ENCODE measurements at regions of chr6 and their contacts with region 1.

Region 1: DNA sequence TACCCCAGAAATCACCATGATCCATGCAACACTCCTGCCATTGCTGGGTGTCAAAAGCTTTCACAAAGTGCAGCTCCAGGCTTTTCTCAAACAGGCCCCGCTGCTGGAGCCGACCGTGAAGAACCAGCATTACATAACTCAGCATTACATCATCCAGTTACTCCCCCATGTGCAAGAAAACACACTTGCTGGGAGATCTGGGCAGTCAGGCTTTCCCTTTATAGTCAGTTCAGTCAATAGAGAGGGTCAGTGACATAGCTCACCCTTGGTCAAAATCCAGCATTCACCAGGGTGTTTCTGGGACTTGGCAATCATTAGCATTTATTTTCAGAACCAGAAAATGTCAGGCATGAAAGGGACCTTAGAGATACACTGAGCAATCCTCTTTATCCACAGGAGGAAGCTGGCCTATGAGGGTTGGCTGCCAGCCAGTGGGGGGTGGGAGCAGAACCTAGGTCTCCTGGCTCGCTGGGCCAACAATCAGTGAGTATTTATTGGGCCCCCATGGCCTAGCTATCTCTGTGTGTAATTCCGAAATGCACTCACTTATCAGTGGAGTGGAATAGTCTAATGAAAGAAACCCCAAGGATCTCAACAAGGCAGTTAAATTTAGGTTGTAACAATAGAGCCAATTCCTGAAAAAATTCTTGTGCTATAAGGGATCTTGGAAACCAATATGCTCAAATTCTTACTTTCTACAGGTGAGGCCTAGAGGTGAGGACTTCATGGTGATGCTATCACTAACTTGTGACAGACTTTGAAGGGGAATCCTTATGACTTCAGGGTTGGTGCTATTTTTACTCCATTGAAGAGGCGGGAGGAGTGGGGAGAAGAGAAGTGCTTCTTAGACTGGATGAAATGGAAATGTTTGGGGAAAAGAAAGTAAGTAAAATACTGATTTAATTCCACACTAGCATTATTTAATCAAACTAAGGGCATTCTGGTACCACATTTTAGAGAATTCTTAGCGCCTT is 54.6 kb downstream of the LYRM4 start:
- DNase-seq: no peak
- H3K4me3 ChIP-seq: no peak overlapping the region
- H3K27ac ChIP-seq: peak overlapping the region; percentile 46 to 72 (median 65)
- H3K4me1 ChIP-seq: peaks cover 11 to 60% (median 27%) of the 10 kb centered on the region in 3 donors
- H3K27me3 ChIP-seq: no peaks in the 10 kb centered on the region
- CTCF ChIP-seq: no peak
- POLR2A ChIP-seq: no peak

Region 2: DNA sequence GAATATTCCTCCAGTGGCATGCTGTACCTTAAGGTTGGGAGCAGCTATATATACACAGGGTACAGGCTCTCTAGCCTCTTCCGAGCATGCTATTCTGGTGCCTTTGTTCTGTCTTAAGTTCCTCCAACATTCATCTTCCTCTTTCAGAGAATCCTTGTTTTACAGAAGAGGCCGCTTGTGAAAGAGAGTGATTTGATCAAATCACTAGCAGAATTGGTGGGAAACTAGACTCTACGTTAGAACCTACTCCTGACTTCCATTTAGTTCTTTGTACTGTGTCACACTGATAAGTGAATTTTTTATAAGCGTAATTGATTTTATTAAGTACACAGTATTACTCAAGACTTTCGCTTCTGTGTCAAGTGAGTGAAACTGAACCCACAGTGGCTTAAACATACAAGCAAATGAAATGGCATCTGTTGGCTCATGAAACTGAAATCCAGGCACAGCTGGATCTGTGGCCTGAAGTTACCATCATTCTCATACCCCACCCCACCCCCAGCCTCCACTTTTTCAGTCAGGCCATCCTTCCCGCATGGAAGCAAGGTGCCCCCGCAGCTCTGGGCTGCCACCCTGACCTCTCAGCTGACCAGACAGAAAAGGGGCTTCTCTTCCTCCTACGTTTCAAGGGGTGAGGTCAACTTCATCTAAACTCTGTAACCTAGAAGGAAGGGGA is 304.6 kb before region 1 on chr6:
- intact Hi-C with region 1: no loop called
- DNase-seq: no peak
- H3K4me3 ChIP-seq: no peak overlapping the region
- H3K27ac ChIP-seq: no peak overlapping the region
- H3K4me1 ChIP-seq: no peaks in the 10 kb centered on the region
- H3K27me3 ChIP-seq: no peaks in the 10 kb centered on the region
- CTCF ChIP-seq: no peak
- POLR2A ChIP-seq: no peak

Region 3: DNA sequence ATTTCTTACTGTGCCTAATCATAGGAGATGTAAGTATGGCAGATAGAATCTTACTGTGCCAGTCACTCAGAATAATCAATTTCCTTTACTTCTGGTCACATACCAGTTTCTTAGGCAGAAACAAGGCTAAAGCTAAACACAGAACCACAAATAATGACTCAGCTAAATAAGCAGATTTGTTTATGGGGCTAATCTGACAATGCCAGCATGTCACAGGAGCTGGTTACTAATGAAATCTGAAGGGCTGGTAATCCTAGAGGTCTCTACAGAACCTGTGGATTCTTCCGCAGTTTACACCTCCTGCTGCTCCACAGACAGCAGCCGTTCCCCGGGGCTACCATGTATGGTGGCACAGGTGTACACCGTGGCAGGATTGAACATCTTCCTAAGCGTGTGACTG is 26.2 kb before region 1 on chr6:
- intact Hi-C with region 1: loop called (anchors 2 kb)
- DNase-seq: no peak
- H3K4me3 ChIP-seq: no peak overlapping the region
- H3K27ac ChIP-seq: no peak overlapping the region
- H3K4me1 ChIP-seq: peaks cover 0 to 5% (median 0%) of the 10 kb centered on the region in 3 donors
- H3K27me3 ChIP-seq: no peaks in the 10 kb centered on the region
- CTCF ChIP-seq: no peak
- POLR2A ChIP-seq: no peak

Region 4: DNA sequence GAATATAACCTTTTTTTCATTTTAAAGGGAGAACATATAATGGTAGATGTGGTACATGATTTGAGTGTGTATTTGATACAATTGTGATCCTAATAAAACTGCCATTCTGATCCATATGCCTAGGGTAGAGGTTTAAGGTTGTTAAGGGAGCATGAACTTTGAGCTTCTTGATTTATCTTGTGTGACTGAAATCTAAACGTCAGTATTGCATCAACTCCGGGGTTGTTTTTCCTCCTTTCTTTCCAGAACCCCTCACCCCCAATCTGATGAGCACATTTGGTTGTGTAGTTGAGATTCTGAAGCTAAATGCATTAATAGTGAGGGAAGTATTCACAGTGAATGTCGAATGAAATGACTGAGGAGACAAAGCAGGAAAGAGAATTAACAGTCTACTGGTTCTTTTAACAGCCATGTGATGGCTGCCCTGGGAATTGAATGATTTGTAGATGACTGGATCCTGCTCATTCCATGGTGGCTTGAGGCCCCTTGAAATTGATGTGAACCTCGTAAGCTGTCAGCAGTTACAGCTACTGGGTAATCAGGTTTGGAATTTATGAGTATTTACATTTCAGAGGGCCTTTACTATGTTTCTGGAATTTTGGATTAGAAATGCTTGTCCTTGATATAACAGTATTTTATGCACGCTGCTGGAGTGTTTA is 99.9 kb after region 1 on chr6:
- intact Hi-C with region 1: no loop called
- DNase-seq: no peak
- H3K4me3 ChIP-seq: no peak overlapping the region
- H3K27ac ChIP-seq: no peak overlapping the region
- H3K4me1 ChIP-seq: peaks cover 0 to 16% (median 3%) of the 10 kb centered on the region in 3 donors
- H3K27me3 ChIP-seq: no peaks in the 10 kb centered on the region
- CTCF ChIP-seq: no peak
- POLR2A ChIP-seq: no peak